ENCODE measurements at regions of chr4 and their contacts with region 1.

Region 1: GRCh38 chr4:52712172-52712990 is 38.8 kb downstream of the ERVMER34-1 start:
- DNase-seq: peak; percentile 97
- H3K4me3 ChIP-seq: peak overlapping the region; percentile 99
- H3K27ac ChIP-seq: peak overlapping the region; percentile 78
- H3K4me1 ChIP-seq: peaks cover 69% of the 10 kb centered on the region
- CTCF ChIP-seq: no peak

Region 2: GRCh38 chr4:52038103-52038912 is 674.1 kb before region 1 on chr4 and contains the start of gene SGCB:
- CTCF ChIA-PET with region 1: no interaction called
- POLR2A ChIA-PET with region 1: no interaction called
- intact Hi-C with region 1: loop called (anchors 2 kb)
- DNase-seq: peak; percentile 70
- H3K4me3 ChIP-seq: peak within 1 kb of the TSS; percentile 96
- H3K27ac ChIP-seq: peak within 1 kb of the TSS; percentile 2
- H3K4me1 ChIP-seq: peaks cover 17% of the 10 kb centered on the region
- CTCF ChIP-seq: no peak
- total RNA-seq, gene SGCB: 6.0 and 7.5 TPM in 2 replicates

Region 3: GRCh38 chr4:52659001-52659721 is 53.2 kb before region 1 on chr4 and contains the start of gene USP46:
- CTCF ChIA-PET with region 1: no interaction called
- POLR2A ChIA-PET with region 1: interaction called, 19 read pairs
- intact Hi-C with region 1: loop called (anchors 2 kb)
- DNase-seq: peak; percentile 72
- H3K4me3 ChIP-seq: peak within 1 kb of the TSS; percentile 92
- H3K27ac ChIP-seq: peak within 1 kb of the TSS; percentile 52
- H3K4me1 ChIP-seq: peaks cover 21% of the 10 kb centered on the region
- CTCF ChIP-seq: no peak
- total RNA-seq, gene USP46: 5.4 and 5.8 TPM in 2 replicates

Region 4: DNA sequence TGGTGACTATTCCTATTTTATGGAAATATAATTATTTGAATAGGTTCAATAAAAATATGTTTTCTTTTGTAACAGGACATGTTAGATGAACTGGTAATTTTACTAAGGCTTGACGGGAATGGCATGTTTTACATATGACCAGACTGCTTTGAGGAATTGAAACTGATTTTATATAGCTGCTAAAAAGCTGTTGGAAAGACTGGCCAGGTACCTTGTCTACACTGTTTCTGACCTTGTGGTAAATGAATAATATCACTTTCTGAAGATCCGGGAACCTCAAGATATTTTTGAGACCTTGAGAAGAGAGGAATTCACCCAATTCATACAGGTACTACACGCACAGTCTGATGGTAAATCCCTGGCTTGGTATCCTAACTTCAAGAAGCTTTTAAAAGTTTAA is 11.2 kb before region 1 on chr4:
- CTCF ChIA-PET with region 1: no interaction called
- POLR2A ChIA-PET with region 1: interaction called, 27 read pairs
- intact Hi-C with region 1: no loop called
- DNase-seq: peak; percentile 65
- H3K4me3 ChIP-seq: peak overlapping the region; percentile 12
- H3K27ac ChIP-seq: peak overlapping the region; percentile 46
- H3K4me1 ChIP-seq: peaks cover 29% of the 10 kb centered on the region
- CTCF ChIP-seq: no peak

Region 5: DNA sequence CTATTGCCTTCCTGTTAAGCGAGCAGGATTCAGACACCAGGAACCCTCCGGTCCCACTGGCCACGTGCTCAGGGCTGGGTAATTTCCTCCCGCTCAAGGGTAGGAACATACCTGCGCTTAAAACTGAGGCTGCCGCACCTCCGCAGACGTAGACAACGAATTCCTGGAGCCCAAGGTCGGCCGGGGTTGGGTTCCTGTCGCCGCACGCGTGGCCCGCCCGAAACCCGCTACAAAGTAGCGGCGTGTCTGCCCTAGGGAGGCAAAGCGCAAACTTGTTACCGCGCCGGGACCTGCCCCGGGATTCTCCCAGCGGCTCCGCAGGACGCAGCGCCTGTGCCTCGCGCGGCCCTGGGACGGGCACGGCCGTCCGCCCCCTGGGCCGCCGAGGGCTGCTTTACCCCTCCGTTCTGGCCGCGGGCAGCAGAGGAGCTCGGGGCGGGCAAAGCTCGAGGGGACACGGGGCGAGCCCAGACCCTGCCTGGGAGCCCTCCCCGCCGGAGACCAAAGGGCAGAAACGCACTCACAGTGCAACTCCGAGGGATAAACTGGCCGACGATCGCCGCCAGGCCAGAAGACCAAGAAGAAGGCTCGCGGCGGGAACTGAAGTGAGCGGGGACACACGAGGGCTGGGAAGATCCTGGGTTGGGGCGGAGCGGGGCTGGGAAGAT is 38.6 kb after region 1 on chr4 and contains the start of gene ERVMER34-1:
- CTCF ChIA-PET with region 1: no interaction called
- POLR2A ChIA-PET with region 1: no interaction called
- intact Hi-C with region 1: no loop called
- DNase-seq: no peak
- H3K4me3 ChIP-seq: no peak within 1 kb of the TSS
- H3K27ac ChIP-seq: no peak within 1 kb of the TSS
- H3K4me1 ChIP-seq: no peaks in the 10 kb centered on the region
- CTCF ChIP-seq: no peak
- total RNA-seq, gene ERVMER34-1: not detected in 2 replicates

Region 6: GRCh38 chr4:53365486-53366300 is 653.3 kb after region 1 on chr4 and contains the start of gene SCFD2:
- CTCF ChIA-PET with region 1: no interaction called
- POLR2A ChIA-PET with region 1: no interaction called
- intact Hi-C with region 1: loop called (anchors 10 kb)
- DNase-seq: peak; percentile 96
- H3K4me3 ChIP-seq: peak within 1 kb of the TSS; percentile 98
- H3K27ac ChIP-seq: peak within 1 kb of the TSS; percentile 50
- H3K4me1 ChIP-seq: peaks cover 60% of the 10 kb centered on the region
- CTCF ChIP-seq: no peak
- total RNA-seq, gene SCFD2: 52.0 and 52.9 TPM in 2 replicates

Region 7: GRCh38 chr4:53748328-53748772 is 1036.0 kb after region 1 on chr4:
- CTCF ChIA-PET with region 1: no interaction called
- POLR2A ChIA-PET with region 1: no interaction called
- intact Hi-C with region 1: loop called (anchors 10 kb)
- DNase-seq: peak; percentile 99
- H3K4me3 ChIP-seq: peak overlapping the region; percentile 22
- H3K27ac ChIP-seq: peak overlapping the region; percentile 93
- H3K4me1 ChIP-seq: peaks cover 84% of the 10 kb centered on the region
- CTCF ChIP-seq: no peak